Lower leg skin (tissue), 4 donors: ENCODE measurements at regions of chr21 and their contacts with region 1.

Region 1: DNA sequence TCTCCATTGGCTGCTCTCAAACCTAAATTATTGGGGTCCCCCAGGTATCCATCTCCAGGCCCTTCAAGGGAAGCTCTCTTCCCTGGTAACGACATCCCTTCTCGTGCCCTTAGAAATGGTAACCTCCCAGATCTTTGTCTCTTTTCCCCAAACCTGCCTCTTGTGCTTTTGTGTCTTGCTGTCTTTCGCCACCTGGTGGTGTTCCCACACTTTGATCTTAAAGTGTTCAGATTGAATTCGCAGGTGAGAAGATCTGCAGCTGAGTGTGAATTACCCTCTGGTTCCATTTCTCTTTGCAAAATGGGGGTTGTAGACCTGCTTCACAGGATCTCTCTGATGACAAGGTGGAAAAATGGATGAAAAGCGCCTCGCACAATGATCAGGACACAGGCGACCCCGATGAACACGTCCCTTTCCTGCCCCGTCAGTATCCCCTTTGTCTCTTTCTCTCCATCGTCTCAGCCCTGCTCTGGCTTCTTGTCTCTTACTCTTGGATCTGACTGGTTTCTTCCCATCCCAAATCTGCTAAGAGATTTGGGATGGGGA is 53.1 kb downstream of the DOP1B start:
- DNase-seq: peak in 1 of 2 donors; percentile 43
- H3K4me3 ChIP-seq: no peak overlapping the region
- CTCF ChIP-seq: no peak
- POLR2A ChIP-seq: no peak

Region 2: DNA sequence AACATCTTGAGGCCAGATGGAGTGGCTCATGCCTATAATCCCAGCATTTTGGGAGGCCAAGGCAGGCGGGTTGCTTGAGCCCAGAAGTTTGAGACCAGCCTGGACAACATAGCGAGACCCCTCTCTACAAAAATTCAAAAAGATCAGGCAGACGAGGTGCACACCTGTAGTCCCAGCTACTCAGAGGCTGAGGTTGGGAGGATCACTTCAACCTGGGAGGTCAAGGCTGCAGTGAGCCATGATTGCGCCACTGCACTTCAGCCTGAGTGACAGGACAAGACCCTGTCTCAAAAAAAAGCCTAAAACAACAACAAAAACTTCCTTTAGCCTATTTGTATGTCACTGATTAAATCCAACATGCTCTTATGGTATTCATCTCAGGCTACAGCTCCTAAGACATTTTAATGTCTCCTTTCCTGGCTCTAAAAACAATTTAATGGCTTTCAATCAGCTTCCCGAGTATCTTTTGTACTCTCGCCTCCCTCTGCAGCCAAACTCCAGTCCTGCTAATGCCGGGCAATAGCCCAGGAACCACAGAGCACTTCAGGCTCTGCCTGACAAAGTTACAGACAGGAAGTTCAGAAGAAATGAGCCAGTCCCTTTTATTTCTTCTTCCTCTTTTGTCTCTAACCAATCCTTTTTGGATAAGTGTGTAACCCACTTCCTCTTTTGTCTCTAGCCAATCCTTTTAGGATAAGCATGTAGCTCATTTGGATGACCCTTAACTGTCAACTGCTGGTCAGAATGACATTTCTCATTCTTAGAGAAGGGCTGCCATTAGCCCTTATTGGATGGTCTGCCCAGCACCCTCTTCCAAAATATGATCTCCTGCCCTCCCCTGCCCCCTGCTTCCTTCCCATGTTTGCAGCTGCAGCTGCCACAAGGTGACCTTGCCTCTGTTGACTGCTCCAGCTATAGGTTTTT is 59.6 kb before region 1 on chr21:
- intact Hi-C with region 1: loop called (anchors 5 kb)
- DNase-seq: no peak
- H3K4me3 ChIP-seq: no peak overlapping the region
- CTCF ChIP-seq: no peak
- POLR2A ChIP-seq: no peak

Region 3: DNA sequence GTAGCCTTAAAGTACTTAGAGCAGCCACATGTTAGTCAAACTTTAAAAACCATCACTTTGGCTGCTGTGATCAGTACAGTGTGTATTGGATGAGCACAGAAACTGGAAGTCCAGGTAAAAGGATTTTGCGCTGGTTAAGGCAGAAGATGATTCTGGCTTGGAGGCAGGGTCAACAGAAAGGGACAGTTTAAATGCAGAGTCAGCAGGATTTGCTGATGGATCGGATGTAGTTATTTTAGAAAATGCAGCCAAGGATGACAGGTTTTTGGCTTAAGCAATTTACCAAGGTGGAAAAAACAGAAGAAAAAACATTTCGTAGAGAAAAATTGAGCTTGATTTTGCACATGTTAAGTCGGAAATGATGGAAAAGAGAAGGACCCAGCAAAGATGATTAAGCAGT is 64.4 kb after region 1 on chr21:
- intact Hi-C with region 1: loop called (anchors 10 kb)
- DNase-seq: no peak
- H3K4me3 ChIP-seq: no peak overlapping the region
- CTCF ChIP-seq: no peak
- POLR2A ChIP-seq: no peak